ENCODE measurements at regions of chr1 and their contacts with region 1.

Region 1: DNA sequence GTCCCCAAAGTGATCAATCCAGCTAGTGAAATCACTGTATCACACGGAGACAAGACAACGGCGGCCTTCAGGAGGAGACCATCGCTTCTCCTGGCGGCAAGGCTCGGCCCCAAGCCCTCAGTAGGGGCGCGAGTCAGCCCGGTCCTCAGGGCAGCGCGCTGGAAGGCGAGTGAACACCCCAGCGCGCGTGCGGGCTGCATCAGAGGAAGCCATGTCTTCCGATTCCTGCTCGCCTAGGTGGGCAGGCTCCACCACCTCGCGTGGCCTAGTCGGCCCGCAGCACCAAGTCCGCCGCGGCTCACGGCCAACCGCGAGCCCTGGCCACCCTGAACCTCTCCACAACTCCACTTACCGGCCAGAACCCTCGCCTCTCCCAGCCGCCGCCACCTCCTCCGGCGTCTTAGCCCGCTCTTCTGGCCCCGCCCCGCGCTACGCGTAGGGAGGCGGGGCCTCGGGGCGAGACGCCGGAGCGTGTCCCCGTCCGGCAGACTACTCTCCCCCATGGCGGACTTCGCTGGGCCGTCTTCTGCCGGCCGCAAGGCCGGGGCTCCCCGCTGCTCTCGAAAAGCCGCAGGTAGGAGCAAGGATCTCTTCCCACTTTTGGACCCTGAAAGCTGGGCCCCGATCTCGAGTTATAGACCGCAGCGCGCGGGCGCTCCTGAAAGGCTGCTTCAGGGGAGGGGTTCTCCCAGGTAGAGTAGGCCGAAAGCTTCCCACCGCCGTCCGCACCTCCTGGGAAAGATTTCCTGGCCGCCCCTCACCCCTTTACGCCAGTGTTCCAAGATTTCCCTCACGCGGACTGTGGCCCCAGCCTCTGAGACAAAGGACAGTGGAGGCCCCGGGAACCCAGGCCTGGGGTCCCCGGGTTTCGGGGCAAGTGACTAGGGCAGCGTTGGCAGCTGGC is at the starts of genes GLMN and RPAP2:
- DNase-seq: peak; percentile 69
- H3K4me3 Mint-ChIP-seq: peak within 1 kb of the TSS; percentile 86
- H3K27ac Mint-ChIP-seq: peak within 1 kb of the TSS; percentile 88
- H3K4me1 Mint-ChIP-seq: peaks cover 34% of the 10 kb centered on the region
- H3K27me3 Mint-ChIP-seq: no peaks in the 10 kb centered on the region
- total RNA-seq, gene GLMN: 14.0 to 15.3 TPM
- total RNA-seq, gene RPAP2: 21.0 to 21.9 TPM

Region 2: DNA sequence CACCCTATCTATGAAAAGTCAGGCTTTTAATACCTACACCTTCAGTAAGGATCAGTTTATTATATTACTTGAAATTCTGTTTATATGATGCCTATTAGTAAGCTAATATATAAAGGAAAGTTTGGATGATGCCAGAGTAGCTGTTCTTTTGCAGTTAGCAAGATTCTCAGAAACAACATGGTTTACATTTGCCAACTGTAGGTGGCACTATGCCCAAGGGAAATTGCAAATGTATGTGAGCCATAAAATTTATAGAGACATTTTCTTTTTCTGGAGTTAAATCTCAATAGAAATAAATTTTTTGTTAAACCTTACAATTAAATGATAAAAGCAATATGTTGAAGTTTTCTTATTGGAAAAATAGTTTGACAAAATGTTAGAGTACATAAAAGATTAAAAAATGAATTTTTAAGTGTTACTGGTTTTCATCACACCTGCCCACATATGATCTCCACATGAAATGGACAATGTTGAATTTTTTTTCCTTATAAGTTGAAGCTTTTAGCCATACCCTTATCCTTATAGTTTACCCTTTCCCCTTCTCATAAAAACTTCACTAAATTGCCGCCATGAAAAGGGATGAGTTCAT is 301.1 kb before region 1 on chr1:
- CTCF ChIA-PET with region 1: interaction called, 3 read pairs
- intact Hi-C with region 1: loop called (anchors 2 kb)
- DNase-seq: peak; percentile 71
- H3K4me3 Mint-ChIP-seq: no peak overlapping the region
- H3K27ac Mint-ChIP-seq: no peak overlapping the region
- H3K4me1 Mint-ChIP-seq: no peaks in the 10 kb centered on the region
- H3K27me3 Mint-ChIP-seq: no peaks in the 10 kb centered on the region

Region 3: GRCh38 chr1:92310185-92310597 is 11.4 kb after region 1 on chr1:
- CTCF ChIA-PET with region 1: interaction called, 10 read pairs
- intact Hi-C with region 1: no loop called
- DNase-seq: no peak
- H3K4me3 Mint-ChIP-seq: no peak overlapping the region
- H3K27ac Mint-ChIP-seq: no peak overlapping the region
- H3K4me1 Mint-ChIP-seq: peaks cover 37% of the 10 kb centered on the region
- H3K27me3 Mint-ChIP-seq: no peaks in the 10 kb centered on the region

Region 4: GRCh38 chr1:92485381-92486257 is 186.8 kb after region 1 on chr1:
- CTCF ChIA-PET with region 1: interaction called, 3 read pairs
- intact Hi-C with region 1: loop called (anchors 2 kb)
- DNase-seq: peak; percentile 91
- H3K4me3 Mint-ChIP-seq: peak overlapping the region; percentile 90
- H3K27ac Mint-ChIP-seq: peak overlapping the region; percentile 93
- H3K4me1 Mint-ChIP-seq: peaks cover 38% of the 10 kb centered on the region
- H3K27me3 Mint-ChIP-seq: no peaks in the 10 kb centered on the region